Thyroid gland (tissue), 4 donors: ENCODE measurements at regions of chr6 and their contacts with region 1.

Region 1: DNA sequence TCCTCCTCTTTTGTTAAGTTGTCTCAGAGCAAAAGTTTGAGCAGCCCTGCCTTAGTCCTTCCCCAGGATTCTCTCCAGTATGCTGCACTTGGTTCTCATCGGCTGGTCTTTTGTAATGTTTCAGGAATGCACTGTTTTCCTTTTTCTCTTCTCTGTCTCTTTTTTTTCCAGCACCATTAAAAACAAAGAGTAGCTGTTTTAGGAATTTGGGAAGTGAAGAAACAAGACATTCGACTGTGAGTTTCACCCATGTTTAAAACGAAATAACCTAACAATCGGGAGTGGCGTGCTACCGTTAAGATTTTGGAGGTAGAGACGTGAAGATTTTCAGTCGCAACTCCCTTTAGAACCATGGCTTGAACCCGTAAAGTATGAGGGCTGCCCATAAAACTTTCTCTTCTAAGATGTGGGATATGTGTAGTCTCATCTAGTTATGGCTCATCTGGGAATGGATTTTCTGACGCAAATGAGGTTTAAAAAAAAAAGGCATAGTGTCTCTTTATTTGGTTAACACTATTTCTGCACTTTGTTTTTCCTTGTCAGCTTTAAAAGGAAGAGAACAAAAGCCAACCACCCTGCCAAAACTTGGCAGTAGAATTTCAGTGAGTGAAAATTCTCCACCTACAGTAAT is 35.9 kb upstream of the RAB23 start:
- DNase-seq: peak; percentile 37 to 51
- H3K4me3 ChIP-seq: no peak overlapping the region
- H3K27ac ChIP-seq: peak overlapping the region; percentile 86 to 99 (median 88)
- H3K4me1 ChIP-seq: peaks cover 53 to 59% of the 10 kb centered on the region in 2 donors
- H3K27me3 ChIP-seq: no peaks in the 10 kb centered on the region
- CTCF ChIP-seq: no peak
- POLR2A ChIP-seq: peak in 1 of 2 donors; percentile 83

Region 2: DNA sequence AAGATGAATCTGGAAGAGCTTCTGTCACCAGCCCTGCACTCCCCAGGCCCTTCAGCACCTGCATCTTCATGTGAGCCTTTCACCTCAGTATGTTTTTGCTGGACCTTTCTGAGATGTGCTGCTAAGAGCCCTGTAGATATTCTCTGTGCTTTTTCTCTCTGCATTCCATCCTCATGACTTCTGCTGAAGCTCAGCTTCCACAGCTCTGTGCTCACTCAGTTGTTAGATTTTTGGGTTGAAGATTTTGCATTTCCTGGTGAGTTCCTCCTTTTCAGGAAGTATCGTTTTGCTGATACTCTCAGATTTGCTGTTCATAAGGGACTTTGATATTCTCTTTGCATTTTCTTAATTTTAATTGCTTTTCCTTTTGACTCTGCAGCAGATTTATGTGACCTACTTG is 193.2 kb before region 1 on chr6:
- intact Hi-C with region 1: no loop called
- DNase-seq: no peak
- H3K4me3 ChIP-seq: no peak overlapping the region
- H3K27ac ChIP-seq: no peak overlapping the region
- H3K4me1 ChIP-seq: no peaks in the 10 kb centered on the region
- H3K27me3 ChIP-seq: no peaks in the 10 kb centered on the region
- CTCF ChIP-seq: no peak
- POLR2A ChIP-seq: no peak

Region 3: DNA sequence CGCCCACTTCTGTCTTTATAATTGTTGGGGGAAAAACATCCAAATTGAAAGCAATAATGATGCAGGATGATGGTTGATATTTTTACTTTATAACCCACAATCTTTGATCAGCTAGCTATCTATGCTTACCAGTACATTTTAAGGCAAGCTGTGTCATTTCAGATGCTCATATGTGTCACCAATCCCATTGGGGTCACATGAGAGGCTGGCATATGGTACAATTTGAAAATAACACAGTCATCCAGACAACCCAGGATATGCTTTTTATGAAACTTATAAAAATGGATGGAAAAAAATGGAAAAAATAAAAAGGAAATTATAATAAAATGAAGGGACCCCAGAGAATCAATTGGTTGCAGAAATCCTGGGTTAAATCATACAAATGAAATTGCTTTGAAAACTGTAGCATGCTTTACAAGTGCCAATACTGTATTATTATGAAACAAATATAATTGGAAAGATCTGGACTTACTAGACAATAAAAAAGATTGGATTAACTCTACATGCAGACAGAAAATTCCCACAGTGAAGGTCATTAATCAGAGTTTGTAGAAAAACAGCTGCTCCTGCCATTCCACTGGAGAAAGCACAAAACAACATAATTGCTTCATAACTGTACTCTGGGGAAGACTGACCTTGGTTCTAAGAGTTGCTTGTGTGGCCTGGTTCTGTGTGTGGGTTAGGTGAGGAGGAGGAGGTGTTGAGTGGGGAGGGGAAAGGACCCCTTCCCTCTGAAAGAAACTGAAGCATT is 46.1 kb after region 1 on chr6:
- intact Hi-C with region 1: loop called (anchors 10 kb)
- DNase-seq: no peak
- H3K4me3 ChIP-seq: no peak overlapping the region
- H3K27ac ChIP-seq: peak overlapping the region in 1 of 3 donors; percentile 92
- H3K4me1 ChIP-seq: peaks cover 5 to 25% of the 10 kb centered on the region in 2 donors
- H3K27me3 ChIP-seq: no peaks in the 10 kb centered on the region
- CTCF ChIP-seq: no peak
- POLR2A ChIP-seq: no peak